ENCODE measurements at regions of chr13 and their contacts with region 1.

Region 1: DNA sequence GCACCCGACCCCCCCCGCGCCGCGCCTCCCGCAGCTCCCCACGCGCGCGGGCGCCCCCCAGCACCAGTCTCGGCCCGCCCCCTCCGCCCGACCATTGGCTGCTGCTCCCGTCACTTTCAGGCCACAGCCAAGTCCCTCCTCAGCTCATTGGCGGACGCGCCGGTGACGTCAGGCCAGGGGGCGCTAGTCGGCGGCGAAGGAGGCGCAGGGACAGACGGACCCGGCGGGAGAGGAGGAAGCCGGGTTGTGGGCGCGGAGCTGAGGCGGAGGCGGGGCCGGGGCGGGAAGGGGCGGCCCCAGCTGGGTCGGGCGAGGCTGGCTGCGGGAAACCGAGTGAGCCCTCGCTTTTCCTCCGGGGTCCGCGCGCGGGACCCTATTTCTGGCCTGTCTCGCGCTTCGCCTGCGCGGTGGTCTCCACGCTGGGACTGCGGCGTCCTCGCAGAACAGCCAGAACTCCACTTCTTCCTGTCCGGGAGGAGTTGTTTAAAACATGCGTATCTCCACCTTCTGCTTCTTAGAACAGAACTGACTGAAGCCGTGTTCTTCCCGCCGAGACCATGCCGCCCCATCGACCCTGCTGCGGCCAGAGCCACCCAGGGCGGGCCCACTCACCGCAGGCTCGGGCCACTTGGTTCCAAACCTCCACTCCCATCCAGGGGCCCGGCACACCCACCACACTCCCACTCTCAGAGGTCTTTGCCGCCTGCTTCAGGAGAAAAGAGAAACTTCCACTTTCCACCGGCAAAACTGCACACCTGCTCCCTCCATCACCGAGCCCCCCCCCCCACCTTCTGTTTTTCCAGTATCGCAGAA is 459 bp upstream of the TMTC4 start:
- DNase-seq: peak; percentile 100
- H3K4me3 Mint-ChIP-seq: peak overlapping the region; percentile 92
- H3K27ac Mint-ChIP-seq: peak overlapping the region; percentile 90
- H3K4me1 Mint-ChIP-seq: peaks cover 25% of the 10 kb centered on the region
- H3K27me3 Mint-ChIP-seq: peaks cover 18% of the 10 kb centered on the region

Region 2: GRCh38 chr13:99606324-99607066 is 1068.6 kb before region 1 on chr13:
- intact Hi-C with region 1: loop called (anchors 10 kb)
- DNase-seq: peak; percentile 96
- H3K4me3 Mint-ChIP-seq: peak within 1 kb of the TSS; percentile 87
- H3K27ac Mint-ChIP-seq: peak within 1 kb of the TSS; percentile 86
- H3K4me1 Mint-ChIP-seq: peaks cover 18% of the 10 kb centered on the region
- H3K27me3 Mint-ChIP-seq: no peaks in the 10 kb centered on the region

Region 3: DNA sequence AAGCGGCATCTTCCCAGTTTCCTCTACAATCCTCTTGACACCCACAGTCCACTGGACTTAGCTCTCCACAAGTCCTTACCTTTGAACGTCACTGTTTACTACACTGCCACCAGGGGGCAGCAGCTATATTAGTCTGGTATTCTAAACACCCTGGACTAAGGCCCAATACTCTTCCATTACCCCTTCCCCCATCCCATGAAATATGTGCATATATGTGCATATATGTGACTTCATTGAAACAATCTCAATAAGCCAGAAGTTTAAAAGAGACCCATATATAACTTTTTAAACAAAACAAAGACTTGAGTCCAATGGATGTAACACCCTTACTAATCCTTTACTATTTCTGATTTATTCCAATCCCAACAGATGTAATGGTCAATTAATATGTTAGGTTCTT is 101.9 kb before region 1 on chr13:
- intact Hi-C with region 1: loop called (anchors 2 kb)
- DNase-seq: peak; percentile 92
- H3K4me3 Mint-ChIP-seq: no peak overlapping the region
- H3K27ac Mint-ChIP-seq: no peak overlapping the region
- H3K4me1 Mint-ChIP-seq: peaks cover 19% of the 10 kb centered on the region
- H3K27me3 Mint-ChIP-seq: no peaks in the 10 kb centered on the region

Region 4: GRCh38 chr13:100588331-100589177 is 86.5 kb before region 1 on chr13 and contains the start of gene GGACT:
- intact Hi-C with region 1: loop called (anchors 1 kb)
- DNase-seq: peak; percentile 95
- H3K4me3 Mint-ChIP-seq: peak within 1 kb of the TSS; percentile 84
- H3K27ac Mint-ChIP-seq: peak within 1 kb of the TSS; percentile 96
- H3K4me1 Mint-ChIP-seq: peaks cover 44% of the 10 kb centered on the region
- H3K27me3 Mint-ChIP-seq: no peaks in the 10 kb centered on the region
- total RNA-seq, gene GGACT: 4.4 and 5.9 TPM in 2 replicates

Region 5: GRCh38 chr13:100608906-100609305 is 66.1 kb before region 1 on chr13:
- intact Hi-C with region 1: loop called (anchors 5 kb)
- DNase-seq: peak; percentile 75
- H3K4me3 Mint-ChIP-seq: peak overlapping the region; percentile 8
- H3K27ac Mint-ChIP-seq: peak overlapping the region; percentile 52
- H3K4me1 Mint-ChIP-seq: peaks cover 26% of the 10 kb centered on the region
- H3K27me3 Mint-ChIP-seq: no peaks in the 10 kb centered on the region